Activated B cell treated with CpG ODN at 0.5 μM for 24 hours (primary cell): ENCODE measurements at regions of chr2 and their contacts with region 1.

Region 1: DNA sequence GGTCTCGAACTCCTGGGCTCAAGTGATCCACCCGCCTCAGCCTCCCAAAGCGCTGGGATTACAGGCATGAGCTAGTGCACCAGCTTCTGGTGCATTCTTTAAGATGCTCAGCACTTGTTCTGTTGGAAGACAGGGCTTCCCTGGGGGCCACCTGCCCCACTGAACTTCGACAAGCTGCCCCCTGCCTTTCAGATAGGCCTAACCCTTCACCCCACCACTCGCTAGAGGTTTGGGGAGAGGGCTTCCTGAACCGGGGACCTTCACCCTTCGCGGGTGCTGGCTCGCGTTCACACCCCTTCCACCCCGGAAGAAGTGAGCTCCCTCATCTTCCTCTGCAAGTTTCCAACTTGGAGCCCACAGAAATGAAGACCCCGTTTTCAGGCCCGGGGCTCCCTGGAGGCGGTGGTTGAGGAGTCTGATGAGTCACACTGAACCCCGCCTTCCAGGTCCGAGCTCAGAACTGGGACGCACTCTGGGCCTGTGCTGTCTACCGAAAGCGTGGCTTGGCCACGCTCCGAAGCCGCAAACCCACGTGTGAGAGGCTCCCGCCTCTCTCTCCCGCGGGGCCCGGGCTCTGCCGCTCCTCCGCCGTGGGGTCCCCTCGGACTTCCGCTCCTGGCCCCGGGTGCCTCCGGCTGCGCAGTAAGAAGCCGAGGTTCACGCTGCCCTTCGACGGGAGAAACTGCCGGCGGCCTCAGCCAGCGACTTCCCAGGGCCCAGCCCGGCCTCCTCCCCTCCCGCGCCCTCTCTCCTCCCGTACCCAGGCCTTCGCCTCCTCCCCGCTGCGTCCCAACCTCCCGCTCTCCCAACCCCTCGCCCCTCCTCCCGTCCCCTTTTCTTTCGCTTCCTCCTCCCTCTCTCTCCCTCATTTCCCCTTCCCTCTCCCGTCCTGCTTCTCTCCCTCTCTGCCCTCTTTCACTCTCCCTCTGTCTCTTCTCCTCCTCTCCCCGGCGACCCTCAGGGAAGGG is 47.5 kb upstream of the SP3 start:
- DNase-seq: peak; percentile 46
- ATAC-seq: peak; percentile 74
- H3K4me3 Mint-ChIP-seq: peak overlapping the region; percentile 73
- H3K27ac Mint-ChIP-seq: peak overlapping the region; percentile 53
- H3K4me1 Mint-ChIP-seq: peaks cover 15% of the 10 kb centered on the region
- H3K27me3 Mint-ChIP-seq: no peaks in the 10 kb centered on the region
- CTCF ChIP-seq: no peak

Region 2: GRCh38 chr2:173990970-173991819 is 21.4 kb before region 1 on chr2:
- CTCF ChIA-PET with region 1: no interaction called
- POLR2A ChIA-PET with region 1: interaction called, 21 read pairs
- intact Hi-C with region 1: loop called (anchors 2 kb)
- DNase-seq: peak; percentile 22
- ATAC-seq: peak; percentile 96
- H3K4me3 Mint-ChIP-seq: peak overlapping the region; percentile 68
- H3K27ac Mint-ChIP-seq: peak overlapping the region; percentile 89
- H3K4me1 Mint-ChIP-seq: peaks cover 40% of the 10 kb centered on the region
- H3K27me3 Mint-ChIP-seq: no peaks in the 10 kb centered on the region
- CTCF ChIP-seq: no peak

Region 3: GRCh38 chr2:174034093-174034492 is 21.5 kb after region 1 on chr2:
- CTCF ChIA-PET with region 1: no interaction called
- POLR2A ChIA-PET with region 1: interaction called, 4 read pairs
- intact Hi-C with region 1: loop called (anchors 2 kb)
- DNase-seq: no peak
- ATAC-seq: no peak
- H3K4me3 Mint-ChIP-seq: no peak overlapping the region
- H3K27ac Mint-ChIP-seq: no peak overlapping the region
- H3K4me1 Mint-ChIP-seq: peaks cover 37% of the 10 kb centered on the region
- H3K27me3 Mint-ChIP-seq: peaks cover 3% of the 10 kb centered on the region
- CTCF ChIP-seq: no peak

Region 4: GRCh38 chr2:175064797-175065196 is 1052.2 kb after region 1 on chr2:
- CTCF ChIA-PET with region 1: no interaction called
- POLR2A ChIA-PET with region 1: no interaction called
- intact Hi-C with region 1: no loop called
- DNase-seq: no peak
- ATAC-seq: no peak
- H3K4me3 Mint-ChIP-seq: no peak overlapping the region
- H3K27ac Mint-ChIP-seq: no peak overlapping the region
- H3K4me1 Mint-ChIP-seq: no peaks in the 10 kb centered on the region
- H3K27me3 Mint-ChIP-seq: no peaks in the 10 kb centered on the region
- CTCF ChIP-seq: no peak